CD8-positive, alpha-beta T cell (primary cell): ENCODE measurements at regions of chr9 and their contacts with region 1.

Region 1: DNA sequence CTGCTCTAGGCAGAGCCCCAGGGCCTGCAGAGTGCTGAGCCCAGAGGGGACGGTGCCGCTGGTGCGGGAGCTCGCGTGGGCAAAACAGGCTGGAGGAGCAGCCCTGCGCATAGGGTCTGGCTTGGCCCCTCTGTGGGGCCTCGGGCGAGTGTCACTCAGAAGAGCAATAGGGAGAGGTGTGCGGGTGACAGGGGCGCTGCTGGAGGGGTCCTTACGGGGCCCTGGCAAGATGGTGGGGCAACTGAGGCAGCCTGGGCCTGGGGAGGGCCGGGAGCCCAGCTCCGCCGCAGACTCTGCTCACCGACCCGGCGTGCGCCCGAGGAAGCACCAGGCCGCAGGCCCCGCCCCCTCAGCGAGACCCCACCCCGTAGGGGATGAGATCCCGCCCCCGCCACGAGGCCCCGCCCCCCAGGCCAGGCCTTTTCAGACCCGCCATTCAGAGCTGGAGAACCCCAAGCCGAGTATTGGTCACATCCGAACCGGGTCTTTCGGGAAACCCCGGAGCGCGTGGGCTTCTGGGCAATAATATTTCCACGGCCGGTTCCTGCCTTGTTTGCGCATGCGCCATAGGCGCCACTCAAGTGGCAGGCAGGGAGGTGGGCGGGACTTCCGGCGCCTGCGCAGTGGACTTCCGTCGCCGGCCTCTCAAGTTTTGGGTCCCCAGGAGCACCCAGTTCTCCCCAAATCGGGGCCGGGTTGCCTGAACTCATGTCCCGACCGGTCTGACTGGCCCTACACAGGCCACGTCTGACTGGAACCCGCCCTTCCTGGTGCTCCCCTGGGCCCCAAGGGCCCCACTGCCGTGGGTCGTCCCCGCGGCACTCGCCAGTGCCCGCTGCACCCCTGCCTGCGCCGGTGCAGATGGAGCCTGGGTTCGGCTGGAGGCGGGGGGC is 1.3 kb upstream of the RNF208 start:
- DNase-seq: peak; percentile 95 to 99 (median 97)
- ATAC-seq: peak; percentile 93
- H3K4me3 ChIP-seq: peak overlapping the region; percentile 75 to 88
- H3K4me3 Mint-ChIP-seq: peak overlapping the region; percentile 83
- H3K27ac ChIP-seq: peak overlapping the region; percentile 69 to 86
- H3K27ac Mint-ChIP-seq: peak overlapping the region; percentile 81
- H3K4me1 ChIP-seq: peaks cover 19% of the 10 kb centered on the region
- H3K4me1 Mint-ChIP-seq: peaks cover 8% of the 10 kb centered on the region
- H3K27me3 ChIP-seq: peaks cover 0 to 5% of the 10 kb centered on the region in 2 experiments
- H3K27me3 Mint-ChIP-seq: peaks cover 3% of the 10 kb centered on the region
- CTCF ChIP-seq: no peak

Region 2: GRCh38 chr9:136944519-136945279 is 278.6 kb before region 1 on chr9 and contains the starts of genes C8G and FBXW5:
- CTCF ChIA-PET with region 1: no interaction called
- POLR2A ChIA-PET with region 1: no interaction called
- intact Hi-C with region 1: loop called in 1 of 2 experiments (anchors 1 kb)
- DNase-seq: peak; percentile 87 to 98 (median 93)
- ATAC-seq: peak; percentile 87
- H3K4me3 ChIP-seq: peak within 1 kb of the TSS; percentile 63 to 79
- H3K4me3 Mint-ChIP-seq: peak within 1 kb of the TSS; percentile 82
- H3K27ac ChIP-seq: peak within 1 kb of the TSS; percentile 28 to 48
- H3K27ac Mint-ChIP-seq: peak within 1 kb of the TSS; percentile 62
- H3K4me1 ChIP-seq: peaks cover 16% of the 10 kb centered on the region
- H3K4me1 Mint-ChIP-seq: peaks cover 12% of the 10 kb centered on the region
- H3K27me3 ChIP-seq: no peaks in the 10 kb centered on the region
- H3K27me3 Mint-ChIP-seq: no peaks in the 10 kb centered on the region
- CTCF ChIP-seq: peak; percentile 96
- total RNA-seq, gene C8G: not detected
- total RNA-seq, gene FBXW5: 38.4 to 39.5 TPM

Region 3: DNA sequence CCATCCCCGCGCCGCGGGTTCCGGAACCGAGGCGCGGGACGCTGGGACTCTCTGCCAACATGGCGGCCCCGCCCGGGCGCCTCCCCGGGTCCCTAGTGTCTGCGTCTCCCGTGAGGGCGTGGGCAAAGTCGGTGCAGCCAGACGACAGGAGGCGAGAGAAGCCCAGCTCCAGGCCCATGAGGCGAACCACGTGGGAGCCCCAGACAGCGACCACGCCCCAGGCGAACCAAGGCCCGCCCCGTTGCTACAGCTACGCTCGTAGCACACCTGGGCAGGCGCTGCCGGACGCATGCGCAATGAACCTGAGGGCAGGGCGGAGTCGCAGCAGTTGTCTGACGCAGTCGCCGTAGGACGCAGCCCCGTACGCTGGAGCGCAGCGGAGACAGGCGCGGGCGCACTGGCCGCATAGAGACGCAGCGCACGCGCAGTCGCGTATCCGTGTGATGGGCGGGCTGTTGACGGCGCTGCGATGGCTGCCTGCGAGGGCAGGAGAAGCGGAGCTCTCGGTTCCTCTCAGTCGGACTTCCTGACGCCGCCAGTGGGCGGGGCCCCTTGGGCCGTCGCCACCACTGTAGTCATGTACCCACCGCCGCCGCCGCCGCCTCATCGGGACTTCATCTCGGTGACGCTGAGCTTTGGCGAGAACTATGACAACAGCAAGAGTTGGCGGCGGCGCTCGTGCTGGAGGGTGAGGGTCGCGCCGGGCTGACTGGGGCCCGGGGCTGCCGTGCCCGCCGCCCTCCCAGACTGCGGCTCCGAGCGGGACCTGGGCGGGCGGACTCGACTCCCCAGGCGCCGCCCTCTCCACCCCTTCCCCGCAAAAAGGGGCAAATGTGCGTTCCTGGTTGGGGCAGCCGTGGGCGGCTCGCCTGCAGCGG is 136.6 kb before region 1 on chr9 and contains the start of gene MAN1B1:
- CTCF ChIA-PET with region 1: interaction called, 4 read pairs
- POLR2A ChIA-PET with region 1: interaction called, 13 read pairs
- intact Hi-C with region 1: loop called (anchors 1 kb)
- DNase-seq: peak; percentile 98 to 100 (median 99)
- ATAC-seq: peak; percentile 84
- H3K4me3 ChIP-seq: peak within 1 kb of the TSS; percentile 76 to 88
- H3K4me3 Mint-ChIP-seq: peak within 1 kb of the TSS; percentile 88
- H3K27ac ChIP-seq: peak within 1 kb of the TSS; percentile 84 to 90
- H3K27ac Mint-ChIP-seq: peak within 1 kb of the TSS; percentile 95
- H3K4me1 ChIP-seq: peaks cover 24% of the 10 kb centered on the region
- H3K4me1 Mint-ChIP-seq: peaks cover 23% of the 10 kb centered on the region
- H3K27me3 ChIP-seq: no peaks in the 10 kb centered on the region
- H3K27me3 Mint-ChIP-seq: no peaks in the 10 kb centered on the region
- CTCF ChIP-seq: no peak
- total RNA-seq, gene MAN1B1: 60.3 to 62.9 TPM

Region 4: GRCh38 chr9:137114610-137115391 is 108.5 kb before region 1 on chr9 and contains the start of gene DPP7:
- CTCF ChIA-PET with region 1: interaction called, 6 read pairs
- POLR2A ChIA-PET with region 1: interaction called, 6 read pairs
- intact Hi-C with region 1: loop called (anchors 1 kb)
- DNase-seq: peak; percentile 50 to 90 (median 78)
- ATAC-seq: peak; percentile 90
- H3K4me3 ChIP-seq: peak within 1 kb of the TSS; percentile 43 to 58
- H3K4me3 Mint-ChIP-seq: peak within 1 kb of the TSS; percentile 69
- H3K27ac ChIP-seq: peak within 1 kb of the TSS in 1 of 2 experiments; percentile 30
- H3K27ac Mint-ChIP-seq: peak within 1 kb of the TSS; percentile 70
- H3K4me1 ChIP-seq: peaks cover 14% of the 10 kb centered on the region
- H3K4me1 Mint-ChIP-seq: peaks cover 7% of the 10 kb centered on the region
- H3K27me3 ChIP-seq: no peaks in the 10 kb centered on the region
- H3K27me3 Mint-ChIP-seq: no peaks in the 10 kb centered on the region
- CTCF ChIP-seq: no peak
- total RNA-seq, gene DPP7: 311 to 325 TPM

Region 5: DNA sequence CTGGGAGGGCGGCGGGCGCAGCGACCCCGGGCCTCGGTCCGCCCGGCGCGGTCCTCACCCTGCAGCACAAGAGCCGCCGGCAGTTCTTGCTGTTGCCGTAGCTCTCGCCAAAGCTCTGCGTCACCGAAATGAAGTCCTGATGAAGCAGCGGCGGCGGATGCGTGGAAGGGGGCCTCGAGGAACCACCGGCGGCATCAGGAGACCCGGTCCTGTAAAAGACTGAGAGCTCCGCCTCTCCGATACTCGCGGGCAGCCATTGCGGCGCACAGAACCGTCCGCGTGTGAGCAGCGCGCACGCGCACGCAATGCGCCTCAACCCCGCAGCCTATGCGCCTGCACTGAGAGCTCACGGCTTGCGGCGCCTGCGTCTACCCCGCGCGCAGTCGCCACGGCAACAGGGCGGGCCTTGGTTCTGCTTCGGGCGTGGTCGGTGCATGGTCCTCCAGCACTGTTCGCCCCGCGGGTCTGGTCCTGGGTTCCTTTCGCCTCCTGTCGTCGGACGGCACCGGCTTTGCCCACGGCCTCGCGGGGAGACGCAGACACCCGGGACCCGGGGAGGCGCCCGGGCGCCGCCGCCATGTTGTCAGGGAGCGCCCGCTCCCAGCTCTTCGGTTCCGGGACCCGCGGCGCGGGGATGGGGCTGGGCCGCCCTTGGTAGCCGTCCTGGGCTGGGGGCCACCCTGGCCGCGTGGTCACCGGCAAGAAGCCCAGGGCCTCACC is 93.7 kb before region 1 on chr9:
- CTCF ChIA-PET with region 1: interaction called, 6 read pairs
- POLR2A ChIA-PET with region 1: interaction called, 15 read pairs
- intact Hi-C with region 1: loop called (anchors 1 kb)
- DNase-seq: peak; percentile 71 to 96 (median 88)
- ATAC-seq: peak; percentile 92
- H3K4me3 ChIP-seq: peak overlapping the region; percentile 70 to 83
- H3K4me3 Mint-ChIP-seq: peak overlapping the region; percentile 87
- H3K27ac ChIP-seq: peak overlapping the region; percentile 62 to 78
- H3K27ac Mint-ChIP-seq: peak overlapping the region; percentile 91
- H3K4me1 ChIP-seq: peaks cover 35% of the 10 kb centered on the region
- H3K4me1 Mint-ChIP-seq: peaks cover 28% of the 10 kb centered on the region
- H3K27me3 ChIP-seq: peaks cover 0 to 17% of the 10 kb centered on the region in 2 experiments
- H3K27me3 Mint-ChIP-seq: peaks cover 9% of the 10 kb centered on the region
- CTCF ChIP-seq: no peak

Region 6: DNA sequence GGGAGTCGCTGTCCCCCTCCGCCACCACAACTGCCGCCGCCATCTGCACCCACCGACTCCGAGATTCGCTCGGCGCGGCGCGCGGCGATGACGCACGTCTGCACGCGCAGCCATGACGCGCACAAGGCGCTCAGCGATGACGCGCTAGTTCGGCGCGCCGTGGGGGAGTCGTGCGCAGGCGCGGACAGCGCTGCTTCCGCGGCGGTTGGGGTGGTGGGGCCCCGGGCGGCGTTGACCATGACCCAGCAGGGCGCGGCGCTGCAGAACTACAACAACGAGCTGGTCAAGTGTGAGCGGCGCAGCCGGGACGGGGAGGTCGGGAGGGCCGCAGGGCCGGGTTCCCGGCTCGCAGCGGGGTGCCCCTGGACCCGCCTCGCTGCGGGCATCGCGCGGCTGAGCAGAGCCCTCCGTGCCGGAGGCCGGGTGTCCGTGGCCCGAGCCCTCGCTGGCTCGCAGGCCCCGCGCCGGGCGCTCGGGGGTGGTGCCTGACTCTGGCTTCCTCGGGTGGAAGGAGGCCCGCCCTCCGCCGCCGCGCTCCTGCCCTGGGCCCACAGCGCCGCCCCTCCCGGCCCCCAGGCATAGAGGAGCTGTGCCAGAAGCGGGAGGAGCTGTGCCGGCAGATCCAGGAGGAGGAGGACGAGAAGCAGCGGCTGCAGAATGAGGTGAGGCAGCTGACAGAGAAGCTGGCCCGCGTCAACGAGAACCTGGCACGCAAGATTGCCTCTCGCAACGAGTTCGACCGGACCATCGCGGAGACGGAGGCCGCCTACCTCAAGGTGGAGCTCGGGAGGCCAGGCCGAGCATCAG is 34.6 kb before region 1 on chr9 and contains the starts of genes ANAPC2 and SSNA1:
- CTCF ChIA-PET with region 1: interaction called, 23 read pairs
- POLR2A ChIA-PET with region 1: interaction called, 15 read pairs
- intact Hi-C with region 1: loop called (anchors 1 kb)
- DNase-seq: peak; percentile 84 to 98 (median 94)
- ATAC-seq: peak; percentile 80
- H3K4me3 ChIP-seq: peak within 1 kb of the TSS; percentile 92 to 100
- H3K4me3 Mint-ChIP-seq: peak within 1 kb of the TSS; percentile 93
- H3K27ac ChIP-seq: peak within 1 kb of the TSS; percentile 95 to 96
- H3K27ac Mint-ChIP-seq: peak within 1 kb of the TSS; percentile 96
- H3K4me1 ChIP-seq: peaks cover 34% of the 10 kb centered on the region
- H3K4me1 Mint-ChIP-seq: peaks cover 41% of the 10 kb centered on the region
- H3K27me3 ChIP-seq: no peaks in the 10 kb centered on the region
- H3K27me3 Mint-ChIP-seq: no peaks in the 10 kb centered on the region
- CTCF ChIP-seq: peak; percentile 56
- total RNA-seq, gene ANAPC2: 166 to 171 TPM
- total RNA-seq, gene SSNA1: 28.8 to 29.6 TPM

Region 7: GRCh38 chr9:137254624-137255447 is 31.5 kb after region 1 on chr9 and contains the start of gene NELFB:
- CTCF ChIA-PET with region 1: interaction called, 5 read pairs
- POLR2A ChIA-PET with region 1: interaction called, 3 read pairs
- intact Hi-C with region 1: loop called (anchors 1 kb)
- DNase-seq: peak; percentile 91 to 99 (median 95)
- ATAC-seq: peak; percentile 92
- H3K4me3 ChIP-seq: peak within 1 kb of the TSS; percentile 81 to 83
- H3K4me3 Mint-ChIP-seq: peak within 1 kb of the TSS; percentile 88
- H3K27ac ChIP-seq: peak within 1 kb of the TSS; percentile 12 to 38
- H3K27ac Mint-ChIP-seq: peak within 1 kb of the TSS; percentile 73
- H3K4me1 ChIP-seq: peaks cover 18% of the 10 kb centered on the region
- H3K4me1 Mint-ChIP-seq: peaks cover 15% of the 10 kb centered on the region
- H3K27me3 ChIP-seq: no peaks in the 10 kb centered on the region
- H3K27me3 Mint-ChIP-seq: no peaks in the 10 kb centered on the region
- CTCF ChIP-seq: no peak
- total RNA-seq, gene NELFB: 17.1 to 17.6 TPM

Region 8: DNA sequence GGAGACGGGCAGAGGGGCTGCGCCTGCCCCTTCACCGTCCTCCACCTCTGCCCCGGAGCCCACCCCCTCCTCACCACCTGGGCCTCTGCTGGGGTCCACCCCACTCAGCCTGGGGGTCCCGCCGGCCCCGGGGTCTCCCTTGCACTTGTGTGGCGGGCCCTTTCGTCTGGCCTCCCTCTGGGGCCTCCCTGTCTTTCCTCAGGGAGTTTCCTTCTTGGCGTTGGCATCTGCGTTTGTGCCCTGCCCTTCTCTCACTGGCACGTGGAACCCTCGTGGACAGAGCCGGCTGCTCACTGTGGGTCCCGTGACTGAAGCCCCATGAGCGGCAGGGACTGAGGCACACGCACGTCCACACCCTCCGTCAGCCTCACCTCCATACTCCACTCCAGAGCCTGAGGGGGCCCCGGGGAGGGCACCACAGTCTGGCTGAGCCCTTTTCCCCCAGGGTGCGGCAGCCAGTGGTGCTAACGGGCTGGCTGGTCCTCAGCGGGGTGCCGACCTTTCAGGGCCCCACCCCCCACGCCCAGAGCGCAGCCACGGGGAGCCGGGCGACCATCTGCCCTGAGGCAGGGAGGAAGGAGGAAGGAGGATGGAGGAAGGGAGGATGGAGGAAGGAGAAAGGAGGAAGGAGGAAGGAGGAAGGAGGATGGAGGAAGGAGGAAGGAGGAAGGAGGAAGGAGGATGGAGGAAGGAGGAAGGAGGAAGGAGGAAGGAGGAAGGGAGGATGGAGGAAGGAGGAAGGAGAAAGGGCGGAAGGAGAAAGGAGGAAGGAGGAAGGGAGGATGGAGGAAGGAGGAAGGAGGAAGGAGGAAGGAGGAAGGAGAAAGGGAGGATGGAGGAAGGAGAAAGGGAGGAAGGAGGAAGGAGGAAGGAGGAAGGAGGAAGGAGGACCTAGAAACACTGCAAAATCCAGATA is 131.8 kb after region 1 on chr9:
- CTCF ChIA-PET with region 1: no interaction called
- POLR2A ChIA-PET with region 1: no interaction called
- intact Hi-C with region 1: no loop called
- DNase-seq: no peak
- ATAC-seq: no peak
- H3K4me3 ChIP-seq: no peak overlapping the region
- H3K4me3 Mint-ChIP-seq: no peak overlapping the region
- H3K27ac ChIP-seq: no peak overlapping the region
- H3K27ac Mint-ChIP-seq: no peak overlapping the region
- H3K4me1 ChIP-seq: no peaks in the 10 kb centered on the region
- H3K4me1 Mint-ChIP-seq: no peaks in the 10 kb centered on the region
- H3K27me3 ChIP-seq: no peaks in the 10 kb centered on the region
- H3K27me3 Mint-ChIP-seq: no peaks in the 10 kb centered on the region
- CTCF ChIP-seq: no peak